Activated CD8-positive, alpha-beta T cell treated with anti-CD3 and anti-CD28 coated beads, Interleukin-2, amount 10 ng/mL, durations not matched to agents 7 days and 5 days (primary cell): ENCODE measurements at regions of chr6 and their contacts with region 1.

Region 1: GRCh38 chr6:84227434-84228197 is at the start of gene CEP162:
- DNase-seq: peak; percentile 93
- ATAC-seq: peak; percentile 96
- H3K4me3 Mint-ChIP-seq: peak within 1 kb of the TSS; percentile 98
- H3K27ac Mint-ChIP-seq: peak within 1 kb of the TSS; percentile 93
- H3K4me1 Mint-ChIP-seq: peaks cover 23% of the 10 kb centered on the region
- H3K27me3 Mint-ChIP-seq: peaks cover 14% of the 10 kb centered on the region
- total RNA-seq, gene CEP162: 7.7 to 8.5 TPM

Region 2: GRCh38 chr6:83859410-83860358 is 367.9 kb before region 1 on chr6 and contains the start of gene CYB5R4:
- CTCF ChIA-PET with region 1: interaction called, 16 read pairs
- POLR2A ChIA-PET with region 1: interaction called, 3 read pairs
- DNase-seq: peak; percentile 96
- ATAC-seq: peak; percentile 98
- H3K4me3 Mint-ChIP-seq: peak within 1 kb of the TSS; percentile 99
- H3K27ac Mint-ChIP-seq: peak within 1 kb of the TSS; percentile 92
- H3K4me1 Mint-ChIP-seq: peaks cover 23% of the 10 kb centered on the region
- H3K27me3 Mint-ChIP-seq: peaks cover 13% of the 10 kb centered on the region
- total RNA-seq, gene CYB5R4: 29.2 to 30.8 TPM

Region 3: DNA sequence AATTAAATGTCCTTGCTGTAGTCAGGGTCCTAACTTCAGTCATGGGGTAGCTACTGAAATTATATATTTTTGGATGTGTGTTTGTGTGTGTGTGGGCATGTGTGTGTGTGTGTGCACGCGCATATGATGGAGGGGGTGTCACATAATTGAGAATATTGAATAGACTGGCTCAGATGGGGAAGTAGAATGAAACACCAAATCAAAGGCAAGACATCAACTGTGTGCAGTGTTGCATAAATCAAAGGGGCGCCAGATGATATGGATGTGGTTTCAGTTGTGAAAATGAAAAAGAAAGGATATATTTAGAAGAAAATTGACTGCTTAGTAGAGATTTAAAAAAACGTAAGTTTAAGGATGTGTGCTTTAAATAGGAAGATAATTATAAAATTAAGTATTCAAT is 144.1 kb after region 1 on chr6:
- CTCF ChIA-PET with region 1: no interaction called
- POLR2A ChIA-PET with region 1: no interaction called
- DNase-seq: no peak
- ATAC-seq: no peak
- H3K4me3 Mint-ChIP-seq: no peak overlapping the region
- H3K27ac Mint-ChIP-seq: no peak overlapping the region
- H3K4me1 Mint-ChIP-seq: no peaks in the 10 kb centered on the region
- H3K27me3 Mint-ChIP-seq: no peaks in the 10 kb centered on the region